OCI-LY7 (cell line): ENCODE measurements at regions of chr4 and their contacts with region 1.

Region 1: GRCh38 chr4:123776254-123776653 is 379.7 kb downstream of the SPRY1 start:
- DNase-seq: peak; percentile 64
- H3K4me3 ChIP-seq: no peak overlapping the region
- H3K27ac ChIP-seq: no peak overlapping the region
- H3K4me1 ChIP-seq: peaks cover 7% of the 10 kb centered on the region
- CTCF ChIP-seq: no peak

Region 2: GRCh38 chr4:122930862-122931261 is 845.4 kb before region 1 on chr4:
- CTCF ChIA-PET with region 1: no interaction called
- POLR2A ChIA-PET with region 1: no interaction called
- intact Hi-C with region 1: no loop called
- DNase-seq: peak; percentile 27
- H3K4me3 ChIP-seq: no peak overlapping the region
- H3K27ac ChIP-seq: no peak overlapping the region
- H3K4me1 ChIP-seq: no peaks in the 10 kb centered on the region
- CTCF ChIP-seq: peak; percentile 87

Region 3: GRCh38 chr4:124144238-124144654 is 368.0 kb after region 1 on chr4:
- CTCF ChIA-PET with region 1: no interaction called
- POLR2A ChIA-PET with region 1: no interaction called
- intact Hi-C with region 1: no loop called
- DNase-seq: no peak
- H3K4me3 ChIP-seq: no peak overlapping the region
- H3K27ac ChIP-seq: no peak overlapping the region
- H3K4me1 ChIP-seq: no peaks in the 10 kb centered on the region
- CTCF ChIP-seq: no peak

Region 4: GRCh38 chr4:124262211-124263179 is 486.2 kb after region 1 on chr4:
- CTCF ChIA-PET with region 1: no interaction called
- POLR2A ChIA-PET with region 1: no interaction called
- intact Hi-C with region 1: loop called (anchors 2 kb)
- DNase-seq: peak; percentile 63
- H3K4me3 ChIP-seq: no peak overlapping the region
- H3K27ac ChIP-seq: no peak overlapping the region
- H3K4me1 ChIP-seq: no peaks in the 10 kb centered on the region
- CTCF ChIP-seq: peak; percentile 82

Region 5: GRCh38 chr4:124322234-124323065 is 546.2 kb after region 1 on chr4:
- CTCF ChIA-PET with region 1: no interaction called
- POLR2A ChIA-PET with region 1: no interaction called
- intact Hi-C with region 1: loop called (anchors 2 kb)
- DNase-seq: peak; percentile 45
- H3K4me3 ChIP-seq: no peak overlapping the region
- H3K27ac ChIP-seq: no peak overlapping the region
- H3K4me1 ChIP-seq: no peaks in the 10 kb centered on the region
- CTCF ChIP-seq: peak; percentile 86